Activated CD8-positive, alpha-beta memory T cell treated with anti-CD3 and anti-CD28 coated beads, Interleukin-2, amount 10 ng/mL, durations not matched to agents 7 days and 5 days (primary cell): ENCODE measurements at regions of chr1 and their contacts with region 1.

Region 1: DNA sequence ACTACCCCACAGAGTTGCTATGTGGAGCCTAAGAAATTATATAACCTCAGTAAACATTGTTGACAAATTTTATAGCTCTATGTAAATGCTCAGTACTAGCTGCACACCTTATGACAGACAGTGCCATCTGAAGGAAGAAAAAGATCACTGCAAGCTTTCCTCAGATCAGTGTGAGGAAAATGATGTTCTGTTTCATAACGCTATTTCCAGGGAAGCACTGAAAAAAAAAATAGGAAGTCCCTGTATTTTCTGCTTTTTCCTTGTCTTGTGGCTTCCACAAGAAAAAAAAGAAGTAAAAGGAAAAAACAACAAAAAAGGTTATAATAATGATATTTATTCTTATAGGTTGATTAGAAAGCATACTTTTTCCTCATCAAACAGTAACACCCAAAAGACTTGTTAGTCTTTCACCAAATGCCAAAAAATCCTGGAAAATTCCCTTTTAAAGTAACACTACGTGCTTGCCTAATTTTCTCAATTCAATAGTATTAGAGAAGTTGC is 23.2 kb downstream of the LYST start:
- DNase-seq: no peak
- ATAC-seq: peak; percentile 83
- H3K4me3 Mint-ChIP-seq: no peak overlapping the region
- H3K27ac Mint-ChIP-seq: no peak overlapping the region
- H3K4me1 Mint-ChIP-seq: peaks cover 57% of the 10 kb centered on the region
- H3K27me3 Mint-ChIP-seq: no peaks in the 10 kb centered on the region

Region 2: GRCh38 chr1:235513495-235514366 is 329.8 kb before region 1 on chr1:
- CTCF ChIA-PET with region 1: interaction called, 16 read pairs
- DNase-seq: no peak
- ATAC-seq: peak; percentile 57
- H3K4me3 Mint-ChIP-seq: no peak overlapping the region
- H3K27ac Mint-ChIP-seq: no peak overlapping the region
- H3K4me1 Mint-ChIP-seq: no peaks in the 10 kb centered on the region
- H3K27me3 Mint-ChIP-seq: peaks cover 23% of the 10 kb centered on the region

Region 3: GRCh38 chr1:235831148-235831547 is 12.4 kb before region 1 on chr1:
- CTCF ChIA-PET with region 1: interaction called, 12 read pairs
- DNase-seq: peak; percentile 58
- ATAC-seq: peak; percentile 75
- H3K4me3 Mint-ChIP-seq: no peak overlapping the region
- H3K27ac Mint-ChIP-seq: peak overlapping the region; percentile 47
- H3K4me1 Mint-ChIP-seq: peaks cover 11% of the 10 kb centered on the region
- H3K27me3 Mint-ChIP-seq: no peaks in the 10 kb centered on the region

Region 4: GRCh38 chr1:235855811-235856429 is 12.4 kb after region 1 on chr1:
- CTCF ChIA-PET with region 1: interaction called, 11 read pairs
- DNase-seq: no peak
- ATAC-seq: peak; percentile 37
- H3K4me3 Mint-ChIP-seq: peak overlapping the region; percentile 23
- H3K27ac Mint-ChIP-seq: peak overlapping the region; percentile 64
- H3K4me1 Mint-ChIP-seq: peaks cover 48% of the 10 kb centered on the region
- H3K27me3 Mint-ChIP-seq: no peaks in the 10 kb centered on the region

Region 5: DNA sequence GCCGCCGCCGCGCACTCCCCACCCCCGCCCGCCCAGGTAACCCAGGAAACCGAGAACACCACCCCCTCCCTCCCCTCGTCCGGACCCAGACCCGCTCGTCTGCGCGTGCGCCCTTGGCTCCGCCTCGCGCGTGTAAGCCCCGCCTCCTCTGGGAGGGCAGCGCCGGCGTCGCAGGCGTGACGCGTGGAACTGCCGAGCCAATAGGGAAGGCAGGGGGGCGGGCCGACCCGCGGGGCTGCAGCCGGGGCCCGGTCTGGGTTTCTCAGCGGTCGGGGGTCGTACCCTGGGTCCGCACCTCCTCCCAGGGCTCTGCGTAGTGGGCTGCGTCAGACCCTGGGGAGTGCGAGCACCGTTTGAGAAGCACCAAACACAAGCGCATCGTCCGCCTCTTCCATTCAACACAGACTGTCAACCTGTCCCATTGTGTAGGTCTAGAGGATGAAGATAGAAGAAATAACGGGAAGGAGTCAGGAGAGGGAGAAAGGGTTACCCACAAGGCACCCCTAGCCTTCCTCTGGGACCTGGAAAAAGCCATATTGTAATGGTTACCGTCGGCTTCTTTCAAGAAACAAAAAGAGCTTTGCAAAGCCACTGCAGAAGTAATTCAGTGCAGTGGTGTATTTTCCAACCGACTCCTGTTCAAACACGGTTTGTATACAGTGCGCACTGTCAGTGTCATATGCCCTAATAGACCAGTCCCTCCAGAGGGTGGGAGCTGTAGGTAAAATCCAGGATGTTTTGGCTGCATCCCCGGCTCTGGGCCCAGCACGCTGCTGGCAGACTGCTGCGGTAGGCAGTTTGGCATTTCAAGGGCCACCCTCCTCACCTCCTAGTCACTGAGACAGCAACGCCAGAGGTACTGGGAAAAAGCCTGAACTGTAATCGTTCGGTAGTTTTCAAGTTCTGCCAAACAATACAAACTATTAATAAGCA is 23.7 kb after region 1 on chr1:
- CTCF ChIA-PET with region 1: interaction called, 21 read pairs
- DNase-seq: peak; percentile 98
- ATAC-seq: peak; percentile 76
- H3K4me3 Mint-ChIP-seq: peak overlapping the region; percentile 89
- H3K27ac Mint-ChIP-seq: peak overlapping the region; percentile 98
- H3K4me1 Mint-ChIP-seq: peaks cover 51% of the 10 kb centered on the region
- H3K27me3 Mint-ChIP-seq: no peaks in the 10 kb centered on the region